ENCODE measurements at regions of chr7 and their contacts with region 1.

Region 1: GRCh38 chr7:1175967-1176851 is 16.2 kb upstream of the ZFAND2A start:
- DNase-seq: peak; percentile 90
- H3K4me3 Mint-ChIP-seq: peak overlapping the region; percentile 60
- H3K27ac Mint-ChIP-seq: no peak overlapping the region
- H3K4me1 Mint-ChIP-seq: peaks cover 11% of the 10 kb centered on the region
- H3K27me3 Mint-ChIP-seq: peaks cover 10% of the 10 kb centered on the region

Region 2: GRCh38 chr7:142248-142941 is 1033.8 kb before region 1 on chr7:
- CTCF ChIA-PET with region 1: no interaction called
- intact Hi-C with region 1: no loop called
- DNase-seq: no peak
- H3K4me3 Mint-ChIP-seq: no peak overlapping the region
- H3K27ac Mint-ChIP-seq: no peak overlapping the region
- H3K4me1 Mint-ChIP-seq: no peaks in the 10 kb centered on the region
- H3K27me3 Mint-ChIP-seq: no peaks in the 10 kb centered on the region

Region 3: GRCh38 chr7:1086588-1087464 is 89.4 kb before region 1 on chr7:
- CTCF ChIA-PET with region 1: interaction called, 12 read pairs
- intact Hi-C with region 1: loop called (anchors 2 kb)
- DNase-seq: peak; percentile 80
- H3K4me3 Mint-ChIP-seq: peak overlapping the region; percentile 38
- H3K27ac Mint-ChIP-seq: no peak overlapping the region
- H3K4me1 Mint-ChIP-seq: peaks cover 12% of the 10 kb centered on the region
- H3K27me3 Mint-ChIP-seq: no peaks in the 10 kb centered on the region

Region 4: GRCh38 chr7:1159891-1160668 is 16.1 kb before region 1 on chr7 and contains the start of gene ZFAND2A:
- CTCF ChIA-PET with region 1: interaction called, 14 read pairs
- intact Hi-C with region 1: no loop called
- DNase-seq: peak; percentile 99
- H3K4me3 Mint-ChIP-seq: peak within 1 kb of the TSS; percentile 86
- H3K27ac Mint-ChIP-seq: peak within 1 kb of the TSS; percentile 78
- H3K4me1 Mint-ChIP-seq: peaks cover 29% of the 10 kb centered on the region
- H3K27me3 Mint-ChIP-seq: no peaks in the 10 kb centered on the region
- total RNA-seq, gene ZFAND2A: 19.1 to 20.7 TPM